Lower leg skin (tissue), 4 donors: ENCODE measurements at regions of chr1 and their contacts with region 1.

Region 1: GRCh38 chr1:95076034-95076433 is 3.3 kb upstream of the ALG14 start:
- DNase-seq: no peak
- H3K4me3 ChIP-seq: no peak overlapping the region
- CTCF ChIP-seq: no peak
- POLR2A ChIP-seq: no peak

Region 2: GRCh38 chr1:95127380-95127779 is 51.3 kb after region 1 on chr1:
- intact Hi-C with region 1: loop called (anchors 2 kb)
- DNase-seq: no peak
- H3K4me3 ChIP-seq: no peak overlapping the region
- CTCF ChIP-seq: no peak
- POLR2A ChIP-seq: no peak

Region 3: DNA sequence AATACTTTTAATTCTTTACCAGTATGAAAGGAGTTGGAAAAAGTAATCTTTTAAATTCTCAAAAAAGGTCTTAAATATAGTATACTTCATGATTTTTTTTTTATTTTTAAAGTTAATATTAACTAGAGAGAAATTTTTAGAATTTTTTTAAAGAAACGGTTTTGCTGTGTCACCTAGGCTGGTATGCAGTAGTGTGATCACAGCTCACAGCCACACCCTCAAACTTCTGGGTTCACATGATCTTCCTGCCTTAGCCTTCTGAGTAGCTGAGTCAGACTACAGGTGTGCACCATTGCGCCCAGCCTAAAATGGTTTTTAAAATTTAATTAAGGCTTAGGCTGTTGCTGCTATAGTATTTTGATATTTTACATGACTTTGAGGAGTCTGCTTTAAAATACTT is 93.5 kb after region 1 on chr1:
- intact Hi-C with region 1: no loop called
- DNase-seq: no peak
- H3K4me3 ChIP-seq: no peak overlapping the region
- CTCF ChIP-seq: no peak
- POLR2A ChIP-seq: no peak